ENCODE measurements at regions of chr2 and their contacts with region 1.

Region 1: DNA sequence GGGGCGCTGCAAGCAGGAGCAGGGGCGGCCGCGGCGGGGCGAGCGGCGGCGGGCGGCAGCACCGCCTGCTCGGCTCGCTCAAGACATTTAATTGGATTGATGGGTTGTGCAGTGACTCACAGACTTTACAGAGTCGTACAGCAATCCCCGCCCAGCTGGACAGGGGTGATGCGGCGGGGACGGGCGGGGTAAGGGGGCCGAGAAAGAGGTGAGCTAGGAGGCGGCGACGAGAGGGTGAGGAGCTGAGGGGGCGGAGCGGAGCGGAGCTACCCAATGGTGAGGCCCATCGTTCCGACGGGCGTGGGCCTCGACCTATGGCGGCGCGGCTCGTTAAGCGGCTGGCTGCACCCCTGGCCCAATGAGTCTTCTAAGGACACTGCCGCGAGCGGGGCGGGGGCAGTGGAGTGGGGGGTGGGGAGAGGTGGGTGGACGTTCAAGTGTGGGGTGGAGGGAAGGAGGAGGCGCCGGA is 97.1 kb upstream of the SERTAD2 start:
- DNase-seq: peak; percentile 99
- H3K4me3 Mint-ChIP-seq: peak overlapping the region; percentile 99
- H3K27ac Mint-ChIP-seq: peak overlapping the region; percentile 89
- H3K4me1 Mint-ChIP-seq: peaks cover 30% of the 10 kb centered on the region
- H3K27me3 Mint-ChIP-seq: no peaks in the 10 kb centered on the region

Region 2: GRCh38 chr2:63588385-63589147 is 1162.3 kb before region 1 on chr2 and contains the starts of genes MDH1 and WDPCP:
- CTCF ChIA-PET with region 1: no interaction called
- intact Hi-C with region 1: loop called (anchors 1 kb)
- DNase-seq: peak; percentile 95
- H3K4me3 Mint-ChIP-seq: peak within 1 kb of the TSS; percentile 99
- H3K27ac Mint-ChIP-seq: peak within 1 kb of the TSS; percentile 94
- H3K4me1 Mint-ChIP-seq: peaks cover 31% of the 10 kb centered on the region
- H3K27me3 Mint-ChIP-seq: no peaks in the 10 kb centered on the region
- total RNA-seq, gene MDH1: 269 to 275 TPM
- total RNA-seq, gene WDPCP: 5.6 to 5.7 TPM

Region 3: DNA sequence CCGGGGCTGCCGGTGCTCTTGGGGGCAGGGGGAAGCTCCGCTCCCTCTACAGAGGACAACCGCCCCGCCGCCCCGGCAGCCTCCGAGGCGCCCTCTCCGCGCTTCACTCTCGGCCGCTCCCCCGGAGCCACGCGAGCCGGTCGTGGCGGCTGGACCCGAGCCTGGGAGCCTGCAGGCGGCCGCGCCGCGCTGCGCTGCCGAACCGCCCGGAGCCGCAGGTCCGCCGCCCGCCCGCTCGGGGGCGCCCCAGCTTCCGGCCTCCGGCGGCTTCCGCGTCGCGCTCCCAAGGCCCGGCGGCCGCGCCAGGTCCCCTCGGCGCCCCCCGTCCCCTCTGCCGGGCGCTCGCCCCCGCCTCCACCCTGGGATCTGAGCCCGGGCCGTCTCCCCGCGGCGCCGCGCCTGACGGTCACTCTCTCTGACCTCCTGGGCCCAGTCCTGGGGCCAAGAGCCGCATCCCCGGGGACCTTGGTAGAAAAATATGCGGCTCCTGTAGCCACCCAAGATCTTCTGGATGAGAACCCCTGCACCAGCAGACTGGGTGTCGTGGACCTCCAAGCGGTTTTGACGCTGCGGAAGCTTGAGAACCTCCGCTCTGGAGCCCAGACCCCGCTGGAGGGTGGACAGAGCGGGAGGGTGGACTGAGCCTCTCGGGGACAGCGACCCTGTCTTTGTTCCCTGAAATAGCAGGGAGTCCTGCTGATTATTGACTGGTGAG is 141.5 kb before region 1 on chr2:
- CTCF ChIA-PET with region 1: interaction called, 4 read pairs
- intact Hi-C with region 1: loop called (anchors 1 kb)
- DNase-seq: peak; percentile 62
- H3K4me3 Mint-ChIP-seq: peak overlapping the region; percentile 65
- H3K27ac Mint-ChIP-seq: no peak overlapping the region
- H3K4me1 Mint-ChIP-seq: peaks cover 24% of the 10 kb centered on the region
- H3K27me3 Mint-ChIP-seq: no peaks in the 10 kb centered on the region

Region 4: GRCh38 chr2:64675860-64676259 is 75.0 kb before region 1 on chr2:
- CTCF ChIA-PET with region 1: interaction called, 5 read pairs
- intact Hi-C with region 1: loop called (anchors 1 kb)
- DNase-seq: peak; percentile 92
- H3K4me3 Mint-ChIP-seq: no peak overlapping the region
- H3K27ac Mint-ChIP-seq: no peak overlapping the region
- H3K4me1 Mint-ChIP-seq: peaks cover 42% of the 10 kb centered on the region
- H3K27me3 Mint-ChIP-seq: no peaks in the 10 kb centered on the region

Region 5: DNA sequence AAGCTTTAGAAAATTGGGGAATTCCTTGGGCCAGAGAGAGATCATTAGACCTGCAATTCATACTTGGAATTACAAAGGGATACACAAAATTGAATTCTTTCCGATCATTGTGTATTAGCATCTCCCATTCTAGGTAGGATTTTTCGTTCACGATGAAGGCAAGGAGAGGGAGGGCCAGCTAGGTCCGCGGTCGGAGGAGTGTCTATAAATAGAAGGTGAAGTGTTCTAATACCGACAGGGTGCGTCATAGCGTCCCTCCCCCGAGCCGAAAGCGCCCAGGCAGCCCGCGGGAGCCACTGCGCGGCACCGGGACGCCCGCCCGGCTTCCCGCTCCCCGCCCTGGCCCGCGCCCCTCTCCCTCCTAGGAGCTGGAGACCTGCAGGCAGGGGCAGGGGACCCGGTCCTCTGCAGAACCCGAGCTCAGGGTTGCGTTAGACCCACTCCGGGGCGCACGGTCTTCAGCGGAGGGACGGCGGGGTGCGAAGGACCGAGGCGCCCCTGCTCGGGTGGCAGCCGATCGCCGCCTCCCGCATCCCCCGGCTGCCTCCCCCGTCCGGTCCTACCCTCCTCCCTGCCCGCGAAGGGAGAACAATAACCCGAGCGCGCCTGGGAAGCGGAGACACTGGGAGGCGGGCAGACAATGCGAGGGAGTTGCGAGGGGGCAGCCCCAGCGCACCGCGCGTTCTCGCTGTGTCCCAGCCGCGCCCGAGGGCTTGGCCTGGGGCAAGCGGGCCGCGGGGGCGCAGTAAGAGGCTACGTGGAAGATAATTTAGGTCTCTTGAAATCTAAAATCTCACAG is 17.0 kb after region 1 on chr2:
- CTCF ChIA-PET with region 1: interaction called, 3 read pairs
- intact Hi-C with region 1: loop called (anchors 1 kb)
- DNase-seq: peak; percentile 85
- H3K4me3 Mint-ChIP-seq: peak overlapping the region; percentile 80
- H3K27ac Mint-ChIP-seq: peak overlapping the region; percentile 76
- H3K4me1 Mint-ChIP-seq: peaks cover 26% of the 10 kb centered on the region
- H3K27me3 Mint-ChIP-seq: no peaks in the 10 kb centered on the region

Region 6: GRCh38 chr2:65056215-65057053 is 305.6 kb after region 1 on chr2 and contains the start of gene CEP68:
- CTCF ChIA-PET with region 1: no interaction called
- intact Hi-C with region 1: loop called (anchors 2 kb)
- DNase-seq: peak; percentile 98
- H3K4me3 Mint-ChIP-seq: peak within 1 kb of the TSS; percentile 93
- H3K27ac Mint-ChIP-seq: peak within 1 kb of the TSS; percentile 67
- H3K4me1 Mint-ChIP-seq: peaks cover 51% of the 10 kb centered on the region
- H3K27me3 Mint-ChIP-seq: no peaks in the 10 kb centered on the region
- total RNA-seq, gene CEP68: 6.0 to 7.3 TPM

Measured in activated naive CD4-positive, alpha-beta T cell treated with anti-CD3 and anti-CD28 coated beads for 36 hours (primary cell).